Right ventricle myocardium superior (tissue), 1 donor: ENCODE measurements at regions of chr12 and their contacts with region 1.

Region 1: GRCh38 chr12:124578445-124578844 is 11.0 kb upstream of the NCOR2 start:
- DNase-seq: no peak
- ATAC-seq: no peak

Region 2: GRCh38 chr12:124636138-124636978 is 57.9 kb after region 1 on chr12:
- intact Hi-C with region 1: no loop called
- DNase-seq: peak; percentile 73
- ATAC-seq: no peak

Region 3: DNA sequence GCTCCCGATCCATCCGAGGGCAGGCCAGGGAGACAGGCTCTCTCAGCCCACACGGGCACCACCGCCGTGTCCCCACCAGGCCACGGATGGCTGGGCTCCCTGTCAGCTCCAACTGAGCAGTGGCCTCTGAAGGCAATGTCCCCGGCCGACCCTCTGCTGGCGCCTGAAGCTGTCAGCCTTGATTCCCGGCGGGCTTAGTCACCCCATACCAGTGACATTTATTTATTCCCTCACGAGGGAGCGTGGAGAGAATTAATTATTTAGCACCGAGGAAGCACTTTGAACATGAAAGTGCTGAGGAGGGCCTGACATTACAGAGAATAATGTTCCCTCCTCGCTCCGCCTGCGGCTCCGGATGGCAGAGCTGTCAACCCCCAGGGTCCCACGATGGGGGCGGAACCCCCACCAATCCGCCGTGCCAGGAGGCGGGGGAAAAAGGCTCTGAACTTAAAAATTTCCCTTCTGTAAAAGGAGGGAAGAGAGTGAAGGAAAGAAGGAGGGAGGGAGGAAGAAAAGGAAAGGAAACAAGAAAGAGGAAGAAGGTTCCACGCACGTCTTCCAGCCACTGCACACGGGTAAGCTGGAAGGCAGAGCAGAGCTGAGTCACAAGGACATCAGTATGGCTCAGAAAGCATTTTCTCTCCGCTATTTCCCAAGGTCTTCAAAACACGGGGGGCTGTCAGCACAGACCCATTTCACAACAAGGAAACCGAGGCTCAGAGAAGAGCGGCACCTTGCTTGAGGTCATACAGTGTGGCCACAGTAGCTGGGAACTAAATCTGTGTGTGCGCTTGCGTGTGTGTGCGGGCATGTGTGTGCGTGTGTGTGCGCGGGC is 97.7 kb after region 1 on chr12:
- intact Hi-C with region 1: loop called (anchors 10 kb)
- DNase-seq: no peak
- ATAC-seq: peak; percentile 58